ENCODE measurements at regions of chr10 and their contacts with region 1.

Region 1: DNA sequence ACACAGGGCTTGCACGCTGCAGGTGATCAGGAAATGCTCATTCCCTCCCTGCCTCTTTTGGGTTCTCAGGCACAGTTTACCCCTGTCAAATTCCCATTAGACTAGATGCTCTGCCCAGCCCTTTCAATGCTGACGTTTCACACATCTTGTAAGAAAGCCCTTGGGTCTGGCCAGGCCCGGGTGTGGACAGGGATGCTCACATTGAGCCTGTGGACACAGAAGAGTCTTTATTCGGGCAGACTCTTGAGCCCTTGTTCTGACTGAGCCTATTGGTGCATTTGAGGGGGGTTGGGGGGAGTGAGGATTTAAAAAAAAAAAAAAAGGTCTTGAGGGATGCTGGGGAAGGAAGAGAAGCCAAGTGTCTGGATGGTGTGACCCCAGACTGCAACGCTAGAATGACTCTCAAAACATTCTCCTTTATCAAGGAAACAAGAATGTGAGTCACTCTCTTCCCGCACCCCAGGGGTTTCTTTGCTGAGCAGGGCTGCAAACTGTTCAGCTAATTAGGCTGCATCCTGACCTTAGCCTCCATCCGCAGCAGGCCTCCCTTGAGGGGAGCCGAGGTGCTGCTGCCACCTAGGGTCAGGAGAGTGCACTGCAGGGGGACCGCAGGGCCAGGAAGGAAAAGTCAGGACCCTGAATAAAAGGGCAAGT is 53.6 kb upstream of the TMEM72 start:
- DNase-seq: peak; percentile 18 to 35 (median 29)
- H3K4me3 ChIP-seq: no peak overlapping the region
- H3K4me3 Mint-ChIP-seq: no peak overlapping the region
- H3K27ac ChIP-seq: no peak overlapping the region
- H3K27ac Mint-ChIP-seq: no peak overlapping the region
- H3K4me1 ChIP-seq: no peaks in the 10 kb centered on the region
- H3K4me1 Mint-ChIP-seq: no peaks in the 10 kb centered on the region
- H3K27me3 ChIP-seq: no peaks in the 10 kb centered on the region
- H3K27me3 Mint-ChIP-seq: peaks cover 1 to 13% (median 3%) of the 10 kb centered on the region in 3 donors
- CTCF ChIP-seq: peak; percentile 99

Region 2: GRCh38 chr10:43671656-43672531 is 1185.6 kb before region 1 on chr10:
- intact Hi-C with region 1: loop called (anchors 2 to 5 kb)
- DNase-seq: peak; percentile 40 to 60 (median 56)
- H3K4me3 ChIP-seq: no peak overlapping the region
- H3K4me3 Mint-ChIP-seq: no peak overlapping the region
- H3K27ac ChIP-seq: no peak overlapping the region
- H3K27ac Mint-ChIP-seq: no peak overlapping the region
- H3K4me1 ChIP-seq: peaks cover 3 to 8% of the 10 kb centered on the region in 2 donors
- H3K4me1 Mint-ChIP-seq: peaks cover 3% of the 10 kb centered on the region
- H3K27me3 ChIP-seq: peaks cover 0 to 15% of the 10 kb centered on the region in 2 donors
- H3K27me3 Mint-ChIP-seq: peaks cover 15 to 35% (median 16%) of the 10 kb centered on the region in 3 donors
- CTCF ChIP-seq: peak; percentile 83

Region 3: DNA sequence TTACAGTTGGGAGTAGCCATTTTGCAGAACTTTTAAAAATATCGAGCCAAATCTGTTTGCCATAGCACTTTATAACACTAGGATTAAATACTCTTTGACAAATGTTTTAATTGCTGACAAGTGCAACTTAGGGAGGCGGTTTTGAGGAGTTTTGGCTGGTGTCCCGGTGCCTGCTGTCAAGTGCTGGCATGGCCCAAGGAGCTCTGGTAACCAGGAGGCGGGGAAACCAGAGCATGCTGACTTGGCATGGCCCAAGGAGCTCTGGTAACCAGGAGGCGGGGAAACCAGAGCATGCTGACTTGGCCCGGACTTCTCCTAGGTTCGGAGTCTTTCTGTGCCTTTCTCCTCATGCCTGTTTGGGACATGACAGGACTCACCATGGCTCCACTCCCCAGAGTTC is 1178.0 kb before region 1 on chr10:
- intact Hi-C with region 1: loop called in 1 of 2 experiments (anchors 5 kb)
- DNase-seq: no peak
- H3K4me3 ChIP-seq: no peak overlapping the region
- H3K4me3 Mint-ChIP-seq: no peak overlapping the region
- H3K27ac ChIP-seq: no peak overlapping the region
- H3K27ac Mint-ChIP-seq: no peak overlapping the region
- H3K4me1 ChIP-seq: no peaks in the 10 kb centered on the region
- H3K4me1 Mint-ChIP-seq: no peaks in the 10 kb centered on the region
- H3K27me3 ChIP-seq: no peaks in the 10 kb centered on the region
- H3K27me3 Mint-ChIP-seq: peaks cover 7 to 11% (median 8%) of the 10 kb centered on the region in 3 donors
- CTCF ChIP-seq: no peak

Region 4: GRCh38 chr10:44386546-44387052 is 470.9 kb before region 1 on chr10:
- intact Hi-C with region 1: loop called in 1 of 2 experiments (anchors 10 kb)
- DNase-seq: peak in 2 of 3 donors; percentile 14 to 27
- H3K4me3 ChIP-seq: no peak overlapping the region
- H3K4me3 Mint-ChIP-seq: peak overlapping the region in 1 of 2 donors; percentile 36
- H3K27ac ChIP-seq: no peak overlapping the region
- H3K27ac Mint-ChIP-seq: no peak overlapping the region
- H3K4me1 ChIP-seq: no peaks in the 10 kb centered on the region
- H3K4me1 Mint-ChIP-seq: peaks cover 4% of the 10 kb centered on the region
- H3K27me3 ChIP-seq: peaks cover 9 to 52% of the 10 kb centered on the region in 2 donors
- H3K27me3 Mint-ChIP-seq: peaks cover 49 to 61% (median 58%) of the 10 kb centered on the region in 3 donors
- CTCF ChIP-seq: peak; percentile 78

Region 5: GRCh38 chr10:44932517-44933450 is 75.3 kb after region 1 on chr10:
- intact Hi-C with region 1: no loop called
- DNase-seq: peak; percentile 74 to 81 (median 79)
- H3K4me3 ChIP-seq: no peak overlapping the region
- H3K4me3 Mint-ChIP-seq: no peak overlapping the region
- H3K27ac ChIP-seq: no peak overlapping the region
- H3K27ac Mint-ChIP-seq: peak overlapping the region in 2 of 7 donors; percentile 60 to 64
- H3K4me1 ChIP-seq: peaks cover 54 to 58% of the 10 kb centered on the region in 2 donors
- H3K4me1 Mint-ChIP-seq: peaks cover 51% of the 10 kb centered on the region
- H3K27me3 ChIP-seq: no peaks in the 10 kb centered on the region
- H3K27me3 Mint-ChIP-seq: peaks cover 0 to 5% (median 0%) of the 10 kb centered on the region in 3 donors
- CTCF ChIP-seq: peak; percentile 97

Region 6: DNA sequence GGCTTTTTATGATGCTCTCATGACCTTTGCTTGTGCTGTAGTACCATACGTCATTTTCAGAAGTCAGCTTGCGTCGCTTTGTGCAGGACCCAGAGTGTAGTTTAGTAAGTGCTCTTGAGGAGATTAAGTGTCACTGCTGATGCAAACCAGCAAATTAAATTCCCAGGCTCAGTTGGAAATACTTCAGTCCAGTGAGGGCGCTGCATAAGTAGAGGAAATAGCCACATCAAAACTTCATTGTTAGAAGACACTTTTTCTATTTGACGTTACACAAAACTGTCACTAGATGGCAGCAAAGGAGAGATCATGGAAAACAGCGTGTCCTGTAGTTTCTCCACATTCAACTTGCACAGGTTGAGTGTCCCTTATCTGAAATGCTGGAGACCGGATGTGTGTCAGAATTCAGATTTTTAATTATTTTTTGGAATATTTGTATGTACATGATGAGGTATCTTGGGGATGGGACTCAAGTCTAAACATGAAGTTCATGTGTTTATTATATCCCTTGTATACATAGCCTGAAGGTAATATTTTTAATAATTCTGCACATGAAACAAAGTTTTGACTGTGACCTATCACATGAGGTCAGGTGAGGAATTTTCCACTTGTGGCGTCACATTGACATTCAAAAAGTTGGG is 151.2 kb after region 1 on chr10:
- intact Hi-C with region 1: no loop called
- DNase-seq: peak; percentile 54 to 71 (median 62)
- H3K4me3 ChIP-seq: no peak overlapping the region
- H3K4me3 Mint-ChIP-seq: no peak overlapping the region
- H3K27ac ChIP-seq: no peak overlapping the region
- H3K27ac Mint-ChIP-seq: no peak overlapping the region
- H3K4me1 ChIP-seq: peaks cover 8 to 9% of the 10 kb centered on the region in 2 donors
- H3K4me1 Mint-ChIP-seq: peaks cover 15% of the 10 kb centered on the region
- H3K27me3 ChIP-seq: no peaks in the 10 kb centered on the region
- H3K27me3 Mint-ChIP-seq: no peaks in the 10 kb centered on the region
- CTCF ChIP-seq: peak; percentile 81

Measured in CD14-positive monocyte (primary cell).